ENCODE measurements at regions of chr11 and their contacts with region 1.

Region 1: GRCh38 chr11:128831174-128832120 is 35.6 kb downstream of the KCNJ1 start:
- DNase-seq: peak; percentile 81
- ATAC-seq: peak; percentile 83 to 88
- H3K4me3 ChIP-seq: peak overlapping the region; percentile 29
- H3K27ac ChIP-seq: peak overlapping the region; percentile 6
- H3K4me1 ChIP-seq: peaks cover 44% of the 10 kb centered on the region
- H3K27me3 ChIP-seq: no peaks in the 10 kb centered on the region
- CTCF ChIP-seq: peak; percentile 89

Region 2: GRCh38 chr11:128157423-128158298 is 673.8 kb before region 1 on chr11:
- intact Hi-C with region 1: loop called (anchors 10 kb)
- DNase-seq: no peak
- ATAC-seq: peak; percentile 87 to 94
- H3K4me3 ChIP-seq: peak overlapping the region; percentile 20
- H3K27ac ChIP-seq: no peak overlapping the region
- H3K4me1 ChIP-seq: no peaks in the 10 kb centered on the region
- H3K27me3 ChIP-seq: no peaks in the 10 kb centered on the region
- CTCF ChIP-seq: peak; percentile 79

Region 3: DNA sequence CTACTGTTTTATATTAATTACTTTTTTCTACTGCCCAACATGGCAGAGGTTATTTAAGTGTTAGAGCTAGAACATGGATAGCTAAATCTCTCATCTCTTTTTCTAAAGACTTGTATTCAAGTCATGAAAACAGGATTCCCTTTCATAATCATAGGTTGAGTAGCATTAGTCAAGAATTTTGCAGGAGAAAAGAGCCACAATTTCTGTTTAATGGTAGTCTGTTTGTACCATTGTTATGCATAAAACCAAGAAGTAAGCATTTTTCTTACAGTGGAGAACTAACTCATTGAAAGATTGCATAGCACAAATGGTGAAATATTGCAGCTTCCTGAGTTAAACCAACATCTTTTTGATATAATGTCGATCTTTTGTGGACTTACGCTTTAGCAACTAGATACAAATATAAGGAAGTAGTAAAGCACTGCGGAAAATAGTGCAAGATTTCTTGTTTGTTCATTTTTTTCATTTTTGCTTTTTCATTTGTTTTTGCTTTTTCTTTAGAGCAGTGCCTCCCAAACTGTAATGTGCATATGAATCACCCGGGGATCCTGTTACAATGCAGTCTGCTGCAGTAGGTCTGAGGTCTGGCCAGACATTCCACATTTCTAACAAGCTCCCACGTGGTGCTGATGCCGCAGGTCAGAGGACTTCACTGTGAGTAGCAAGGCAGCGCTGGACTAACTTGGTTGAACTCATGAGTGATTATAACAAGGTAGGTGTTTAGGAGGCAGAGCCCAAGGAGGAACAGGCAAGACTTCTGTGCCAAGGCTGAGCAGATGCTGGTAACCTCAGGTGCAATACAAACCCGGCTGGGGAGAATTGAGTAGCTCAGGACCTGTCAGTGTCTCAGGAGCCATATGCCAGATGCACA is 248.7 kb before region 1 on chr11:
- intact Hi-C with region 1: no loop called
- DNase-seq: no peak
- ATAC-seq: peak in 1 of 2 donors; percentile 61
- H3K4me3 ChIP-seq: no peak overlapping the region
- H3K27ac ChIP-seq: no peak overlapping the region
- H3K4me1 ChIP-seq: peaks cover 14% of the 10 kb centered on the region
- H3K27me3 ChIP-seq: no peaks in the 10 kb centered on the region
- CTCF ChIP-seq: no peak

Region 4: GRCh38 chr11:128684549-128685401 is 146.7 kb before region 1 on chr11:
- intact Hi-C with region 1: no loop called
- DNase-seq: peak; percentile 51
- ATAC-seq: peak in 1 of 2 donors; percentile 16
- H3K4me3 ChIP-seq: peak overlapping the region; percentile 31
- H3K27ac ChIP-seq: no peak overlapping the region
- H3K4me1 ChIP-seq: peaks cover 32% of the 10 kb centered on the region
- H3K27me3 ChIP-seq: peaks cover 41% of the 10 kb centered on the region
- CTCF ChIP-seq: no peak

Measured in lower lobe of right lung (tissue), 2 donors.